ENCODE measurements at regions of chr2 and their contacts with region 1.

Region 1: DNA sequence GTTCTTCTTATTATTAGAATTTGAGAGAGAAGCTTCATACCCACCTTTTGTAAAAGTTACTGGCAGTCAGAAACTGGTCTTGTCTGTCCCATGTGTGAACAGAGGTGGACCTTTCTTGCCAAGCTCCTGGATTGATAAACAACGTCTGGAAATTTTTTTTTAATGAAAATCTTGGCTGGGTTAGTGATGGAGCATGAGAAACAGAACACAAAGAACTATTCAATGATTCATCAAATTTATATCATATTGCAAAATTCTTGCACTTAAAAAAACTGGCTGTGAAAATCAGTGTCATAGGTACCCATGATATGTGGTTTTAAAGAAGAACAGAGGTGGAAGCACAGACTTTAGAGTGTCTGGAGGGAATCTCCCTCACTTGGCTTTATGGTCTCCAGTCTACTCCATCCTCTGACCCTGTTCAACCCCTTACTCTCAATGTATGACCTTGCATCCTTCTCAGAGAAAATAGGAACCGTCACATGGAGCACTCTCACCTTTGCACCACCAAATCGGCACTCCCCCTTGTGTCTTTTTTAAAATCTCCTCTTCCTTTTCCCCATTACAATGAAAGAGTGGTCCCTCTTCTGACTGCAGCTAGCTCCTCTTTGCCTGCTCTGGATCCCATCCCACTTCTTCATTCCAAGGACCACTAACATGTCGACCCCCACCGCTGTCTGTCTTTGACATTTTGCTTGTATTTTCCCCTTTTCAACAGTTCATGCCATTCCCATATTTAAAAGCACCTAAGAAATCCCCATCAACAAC is 58.2 kb downstream of the COPS8 start:
- DNase-seq: peak; percentile 79
- H3K4me3 ChIP-seq: no peak overlapping the region
- H3K27ac ChIP-seq: no peak overlapping the region
- H3K4me1 ChIP-seq: peaks cover 31% of the 10 kb centered on the region
- H3K27me3 ChIP-seq: no peaks in the 10 kb centered on the region
- CTCF ChIP-seq: no peak

Region 2: GRCh38 chr2:236758406-236758805 is 385.5 kb before region 1 on chr2:
- CTCF ChIA-PET with region 1: no interaction called
- dilution Hi-C with region 1: no loop called
- in situ Hi-C with region 1: no loop called
- intact Hi-C with region 1: no loop called
- DNase-seq: no peak
- H3K4me3 ChIP-seq: no peak overlapping the region
- H3K27ac ChIP-seq: no peak overlapping the region
- H3K4me1 ChIP-seq: peaks cover 20% of the 10 kb centered on the region
- H3K27me3 ChIP-seq: no peaks in the 10 kb centered on the region
- CTCF ChIP-seq: no peak

Region 3: GRCh38 chr2:237072067-237072931 is 71.6 kb before region 1 on chr2:
- CTCF ChIA-PET with region 1: no interaction called
- dilution Hi-C with region 1: no loop called
- in situ Hi-C with region 1: no loop called
- intact Hi-C with region 1: no loop called
- DNase-seq: peak; percentile 31
- H3K4me3 ChIP-seq: no peak overlapping the region
- H3K27ac ChIP-seq: no peak overlapping the region
- H3K4me1 ChIP-seq: no peaks in the 10 kb centered on the region
- H3K27me3 ChIP-seq: no peaks in the 10 kb centered on the region
- CTCF ChIP-seq: peak; percentile 94 to 99

Region 4: GRCh38 chr2:237128026-237128703 is 15.7 kb before region 1 on chr2:
- CTCF ChIA-PET with region 1: no interaction called
- dilution Hi-C with region 1: no loop called
- in situ Hi-C with region 1: no loop called
- intact Hi-C with region 1: loop called (anchors 2 kb)
- DNase-seq: peak; percentile 97
- H3K4me3 ChIP-seq: no peak overlapping the region
- H3K27ac ChIP-seq: peak overlapping the region; percentile 10
- H3K4me1 ChIP-seq: peaks cover 13% of the 10 kb centered on the region
- H3K27me3 ChIP-seq: no peaks in the 10 kb centered on the region
- CTCF ChIP-seq: peak in 1 of 2 donors; percentile 16

Region 5: GRCh38 chr2:237223201-237223861 is 79.5 kb after region 1 on chr2:
- CTCF ChIA-PET with region 1: no interaction called
- dilution Hi-C with region 1: no loop called
- in situ Hi-C with region 1: no loop called
- intact Hi-C with region 1: no loop called
- DNase-seq: peak; percentile 90
- H3K4me3 ChIP-seq: no peak overlapping the region
- H3K27ac ChIP-seq: peak overlapping the region; percentile 8
- H3K4me1 ChIP-seq: peaks cover 39% of the 10 kb centered on the region
- H3K27me3 ChIP-seq: no peaks in the 10 kb centered on the region
- CTCF ChIP-seq: no peak

Measured in mammary epithelial cell (primary cell).